GM13977 (cell line): ENCODE measurements at regions of chr17 and their contacts with region 1.

Region 1: GRCh38 chr17:45135192-45135977 is at the start of gene ACBD4:
- DNase-seq: peak; percentile 98
- CTCF ChIP-seq: peak; percentile 100

Region 2: DNA sequence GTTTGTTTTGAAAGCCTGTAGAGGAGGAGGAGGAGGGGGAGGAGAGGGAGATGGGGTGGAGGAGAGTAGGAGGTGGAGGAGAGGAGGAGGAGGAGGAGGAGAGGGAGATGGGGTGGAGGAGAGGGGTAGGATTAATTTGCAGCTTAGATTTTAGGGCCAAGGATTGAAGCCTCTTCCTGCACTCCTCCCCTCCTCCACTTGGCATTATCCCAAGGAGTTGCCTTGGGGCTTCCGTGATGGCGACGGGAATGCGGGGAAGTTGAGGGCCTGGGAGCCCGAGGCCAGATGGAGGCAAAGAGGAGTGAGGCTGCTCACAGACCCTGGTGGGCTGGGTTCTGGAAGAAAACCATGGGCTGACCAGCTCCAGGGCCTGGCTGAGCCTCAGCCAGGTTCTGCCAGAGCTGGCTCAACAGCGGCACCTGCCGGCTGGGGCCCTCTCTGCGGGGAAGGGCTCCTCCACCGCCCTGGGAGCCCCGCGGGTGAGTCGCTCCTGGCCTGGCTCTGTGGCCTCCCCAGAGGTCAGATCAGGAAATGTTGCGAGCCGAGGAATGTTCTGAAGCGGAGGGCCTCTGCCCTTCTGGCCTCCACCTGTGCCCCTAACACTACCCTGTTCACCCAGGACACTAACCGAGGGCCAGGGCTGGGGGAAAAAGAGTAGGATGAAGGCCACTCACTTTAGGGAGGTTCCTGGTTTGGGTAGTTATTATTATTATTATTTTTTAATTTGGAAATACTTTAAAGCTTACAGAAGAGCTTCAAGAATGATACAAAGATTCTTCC is 62.4 kb after region 1 on chr17:
- in situ Hi-C with region 1: loop called (anchors 5 kb)
- DNase-seq: peak; percentile 85
- CTCF ChIP-seq: peak; percentile 99